GM13977 (cell line): ENCODE measurements at regions of chr6 and their contacts with region 1.

Region 1: DNA sequence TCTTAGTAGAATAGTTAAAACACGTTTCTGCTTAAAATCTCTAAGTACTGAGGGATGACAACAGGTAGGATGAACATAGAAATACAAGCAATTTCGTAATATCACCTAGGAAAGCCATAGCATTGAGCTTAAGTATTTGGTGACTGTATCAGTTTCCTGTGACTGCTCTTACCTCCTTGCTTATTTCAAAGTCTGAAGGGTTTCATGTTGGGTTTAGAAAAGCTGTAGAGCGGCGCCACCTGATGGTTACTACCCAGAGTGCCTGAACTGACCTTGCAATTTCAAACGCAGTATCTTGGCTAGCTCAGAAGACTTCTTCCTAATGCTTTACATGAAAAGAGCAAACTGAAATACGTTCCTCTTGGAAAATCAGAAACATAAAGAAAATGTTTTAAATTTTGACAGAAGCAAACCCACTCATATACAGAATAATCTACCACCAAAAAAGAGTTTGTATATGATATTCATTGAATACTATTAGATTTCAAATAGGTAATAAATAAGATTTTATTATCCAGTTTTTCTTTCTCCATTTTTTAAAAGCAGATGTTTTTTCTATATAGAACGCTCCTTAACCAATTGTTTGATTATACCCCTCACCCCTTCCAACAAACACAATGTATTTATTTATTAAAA is 82.3 kb upstream of the RIPOR2 start:
- DNase-seq: peak; percentile 64
- CTCF ChIP-seq: peak; percentile 81

Region 2: DNA sequence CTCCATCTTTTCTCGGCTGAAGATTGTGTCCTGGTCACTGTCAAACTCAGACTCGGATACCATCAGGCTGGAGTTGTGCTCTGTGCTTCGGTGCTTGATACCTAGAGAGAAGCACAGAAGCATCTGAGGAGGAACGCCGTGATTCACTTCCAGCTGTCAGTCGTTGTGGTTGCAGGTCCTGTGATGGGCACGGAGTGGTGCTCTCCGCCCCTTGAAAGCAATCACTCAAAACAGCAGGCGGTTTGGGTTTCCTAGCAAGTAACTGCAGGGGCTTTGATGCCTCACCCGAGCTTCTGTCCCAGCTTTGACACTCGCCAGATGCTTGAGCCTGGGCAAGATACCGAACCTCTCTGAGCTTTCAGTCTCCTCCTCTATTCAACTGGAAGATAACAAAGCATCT is 470.8 kb before region 1 on chr6:
- in situ Hi-C with region 1: no loop called
- DNase-seq: peak; percentile 17
- CTCF ChIP-seq: peak; percentile 39

Region 3: DNA sequence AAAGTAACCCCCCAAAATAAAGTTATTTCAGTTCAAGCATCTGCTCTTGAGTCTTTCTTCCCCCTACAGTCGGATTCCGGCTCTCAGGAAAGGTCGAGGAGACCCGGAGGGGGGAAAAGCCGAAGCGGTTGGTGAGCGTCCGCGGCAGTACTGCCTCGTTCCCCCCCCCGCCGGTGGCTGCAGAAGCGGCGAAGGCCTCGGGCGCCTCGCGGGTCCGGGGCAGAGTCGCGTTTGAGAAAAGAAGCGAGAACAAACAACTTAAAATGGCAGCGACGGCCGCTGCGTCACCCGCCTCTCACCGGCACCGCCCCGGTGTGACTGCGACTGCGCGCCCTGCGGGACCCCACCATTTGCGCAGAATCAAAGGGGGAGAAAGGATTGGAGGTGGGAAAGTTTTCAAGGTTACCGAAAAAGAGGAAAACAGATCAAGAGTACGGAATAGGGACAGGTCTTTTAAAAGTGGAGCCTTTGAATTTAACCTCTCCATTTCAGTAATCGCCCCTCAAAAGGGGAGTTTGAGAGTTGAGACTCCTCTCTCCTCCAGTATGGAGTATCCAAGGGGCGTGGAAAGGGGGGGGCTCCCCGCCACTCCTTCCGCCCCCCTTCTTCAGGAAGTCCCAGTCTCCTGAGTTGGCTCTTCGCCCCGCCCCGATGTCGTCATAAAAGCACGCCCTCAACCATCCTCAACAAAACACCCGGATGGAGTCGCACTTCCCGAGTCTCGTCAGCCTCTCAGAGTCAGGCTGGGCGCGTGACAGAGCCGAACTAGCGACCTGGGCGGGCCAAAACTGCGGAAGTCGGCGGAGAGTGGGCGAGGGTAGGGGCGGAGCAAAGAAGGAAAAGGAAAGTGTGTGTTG is 297.2 kb before region 1 on chr6:
- in situ Hi-C with region 1: loop called (anchors 25 kb)
- DNase-seq: peak; percentile 96
- CTCF ChIP-seq: no peak

Region 4: GRCh38 chr6:24855395-24856245 is 162.4 kb before region 1 on chr6:
- in situ Hi-C with region 1: loop called (anchors 10 kb)
- DNase-seq: peak; percentile 75
- CTCF ChIP-seq: peak; percentile 80